RWPE1 (cell line): ENCODE measurements at regions of chr7 and their contacts with region 1.

Region 1: GRCh38 chr7:76314042-76314721 is 11.7 kb downstream of the HSPB1 start:
- DNase-seq: peak; percentile 90
- H3K27ac ChIP-seq: peak overlapping the region; percentile 100
- CTCF ChIP-seq: peak; percentile 100

Region 2: GRCh38 chr7:75961218-75961617 is 353.0 kb before region 1 on chr7:
- CTCF ChIA-PET with region 1: no interaction called
- POLR2A ChIA-PET with region 1: no interaction called
- DNase-seq: no peak
- H3K27ac ChIP-seq: no peak overlapping the region
- CTCF ChIP-seq: no peak

Region 3: GRCh38 chr7:75971961-75972763 is 342.0 kb before region 1 on chr7:
- CTCF ChIA-PET with region 1: no interaction called
- POLR2A ChIA-PET with region 1: no interaction called
- DNase-seq: no peak
- H3K27ac ChIP-seq: peak overlapping the region; percentile 6; the same call in 1 of the 2 replicates
- CTCF ChIP-seq: no peak

Region 4: GRCh38 chr7:76291343-76292212 is 22.6 kb before region 1 on chr7:
- CTCF ChIA-PET with region 1: interaction called, 29 read pairs
- POLR2A ChIA-PET with region 1: interaction called, 6 read pairs
- DNase-seq: peak; percentile 88
- H3K27ac ChIP-seq: peak overlapping the region; percentile 100
- CTCF ChIP-seq: peak; percentile 98